ENCODE measurements at regions of chr10 and their contacts with region 1.

Region 1: GRCh38 chr10:35607475-35608327 is 2.6 kb downstream of the GJD4 start:
- DNase-seq: peak; percentile 19
- H3K4me3 Mint-ChIP-seq: peak overlapping the region; percentile 43
- H3K27ac Mint-ChIP-seq: no peak overlapping the region
- H3K4me1 Mint-ChIP-seq: peaks cover 5% of the 10 kb centered on the region
- H3K27me3 Mint-ChIP-seq: peaks cover 46% of the 10 kb centered on the region

Region 2: DNA sequence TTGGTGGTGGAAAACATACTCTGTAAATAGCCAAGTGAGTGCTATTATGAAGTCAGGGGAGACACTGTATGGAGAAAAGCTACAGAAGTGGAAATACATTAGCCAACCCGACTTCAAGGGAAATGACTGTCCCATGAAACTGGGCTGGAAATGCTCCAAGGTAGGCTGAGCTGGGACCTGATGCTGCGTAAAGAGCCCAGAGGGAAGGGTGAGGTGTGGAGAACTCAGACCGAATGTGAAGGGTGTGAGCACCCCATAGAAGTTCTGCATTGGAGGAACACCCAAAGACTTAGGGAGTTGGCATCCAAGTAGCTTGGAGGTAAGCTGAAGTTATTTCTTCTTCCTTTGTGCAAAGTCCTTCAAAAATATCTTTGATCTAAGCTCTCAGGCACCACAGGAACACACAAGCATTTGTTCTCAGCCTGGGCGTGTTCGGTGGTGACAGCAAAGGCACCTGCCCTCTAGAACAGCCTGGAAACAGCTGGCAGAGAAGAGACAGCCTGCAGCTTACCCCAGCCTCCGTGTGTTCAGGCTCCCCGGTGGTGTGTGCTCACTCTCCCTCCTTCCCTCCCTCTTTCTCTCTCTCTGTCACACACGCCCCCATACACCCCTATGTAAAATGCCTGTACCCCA is 21.7 kb before region 1 on chr10:
- CTCF ChIA-PET with region 1: interaction called, 4 read pairs
- POLR2A ChIA-PET with region 1: no interaction called
- intact Hi-C with region 1: loop called (anchors 2 kb)
- DNase-seq: no peak
- H3K4me3 Mint-ChIP-seq: no peak overlapping the region
- H3K27ac Mint-ChIP-seq: no peak overlapping the region
- H3K4me1 Mint-ChIP-seq: no peaks in the 10 kb centered on the region
- H3K27me3 Mint-ChIP-seq: peaks cover 15% of the 10 kb centered on the region